ENCODE measurements at regions of chr17 and their contacts with region 1.

Region 1: DNA sequence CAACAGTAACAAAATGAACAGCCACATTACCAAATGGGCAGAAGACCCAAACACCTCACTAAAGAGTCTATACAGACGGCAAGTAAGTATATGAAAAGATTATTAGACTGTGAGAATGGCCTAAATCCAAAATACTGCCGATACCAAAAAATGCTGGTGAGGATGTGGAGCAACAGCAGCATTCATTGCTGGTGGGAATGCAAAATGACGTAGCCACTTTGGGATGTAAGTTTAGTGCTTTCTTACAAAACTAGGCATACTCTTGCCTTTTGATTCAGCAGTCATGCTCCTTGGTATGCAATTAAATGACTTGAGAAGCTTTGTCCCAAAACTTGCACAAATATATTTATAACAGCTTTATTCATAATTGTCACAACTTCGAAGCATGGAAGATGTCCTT is 43.8 kb downstream of the RABEP1 start:
- DNase-seq: no peak
- ATAC-seq: no peak
- H3K4me3 ChIP-seq: no peak overlapping the region
- H3K27ac ChIP-seq: no peak overlapping the region
- H3K4me1 ChIP-seq: no peaks in the 10 kb centered on the region
- H3K27me3 ChIP-seq: no peaks in the 10 kb centered on the region
- CTCF ChIP-seq: no peak

Region 2: DNA sequence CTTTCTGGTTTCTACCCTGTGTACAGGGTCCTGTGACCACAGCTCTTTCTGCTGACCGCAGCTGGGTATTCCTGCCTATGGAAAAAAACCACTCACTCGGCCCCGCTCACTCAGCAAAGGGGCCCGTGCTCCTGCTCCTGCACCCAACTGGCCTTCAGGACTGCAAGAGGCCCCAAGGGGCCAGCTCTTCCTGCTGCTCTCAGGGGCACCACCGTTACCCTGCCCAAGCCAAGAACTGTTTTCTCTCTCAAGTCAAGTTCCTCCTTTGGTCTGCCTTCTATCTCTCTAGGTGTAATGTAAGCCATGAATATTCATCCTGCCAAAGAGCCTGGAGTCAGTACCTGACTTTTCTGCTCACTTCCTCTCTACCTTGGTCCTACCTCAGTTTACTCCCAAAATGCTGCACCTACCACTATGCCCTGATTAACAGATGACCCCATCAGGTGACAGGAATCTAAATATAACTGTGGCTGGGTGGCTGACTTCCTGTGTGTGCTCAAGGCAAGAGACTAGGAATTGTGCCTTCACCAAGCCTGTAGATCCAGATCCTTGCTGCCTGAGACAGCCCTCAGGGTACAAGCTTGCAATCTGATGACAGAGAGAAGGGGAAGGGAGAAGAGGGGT is 70.8 kb before region 1 on chr17:
- intact Hi-C with region 1: loop called in 1 of 2 experiments (anchors 5 kb)
- DNase-seq: no peak
- ATAC-seq: no peak
- H3K4me3 ChIP-seq: no peak overlapping the region
- H3K27ac ChIP-seq: no peak overlapping the region
- H3K4me1 ChIP-seq: no peaks in the 10 kb centered on the region
- H3K27me3 ChIP-seq: no peaks in the 10 kb centered on the region
- CTCF ChIP-seq: no peak